Endothelial cell of umbilical vein (primary cell): ENCODE measurements at regions of chr1 and their contacts with region 1.

Region 1: DNA sequence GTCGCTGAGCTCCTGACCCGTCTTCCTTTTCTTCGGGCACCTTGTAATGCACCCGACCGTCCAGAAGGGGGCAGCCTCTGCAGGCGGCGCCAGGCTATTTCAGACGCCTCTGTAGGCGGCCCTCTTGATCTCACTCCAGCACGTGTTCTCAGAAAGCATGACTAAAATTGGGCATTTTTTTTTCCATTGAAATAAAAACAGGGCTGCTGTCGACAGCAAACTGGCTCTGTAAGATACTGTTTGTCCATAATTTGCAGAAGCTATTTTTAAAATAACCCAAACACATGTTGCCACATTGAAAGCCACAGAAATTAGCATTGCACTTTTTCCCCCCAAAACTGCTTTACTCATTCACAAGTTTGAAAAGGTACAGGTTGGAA is 78.0 kb downstream of the STUM start:
- DNase-seq: peak; percentile 66
- H3K4me3 ChIP-seq: no peak overlapping the region
- H3K27ac ChIP-seq: no peak overlapping the region
- H3K4me1 ChIP-seq: no peaks in the 10 kb centered on the region
- H3K27me3 ChIP-seq: no peaks in the 10 kb centered on the region
- CTCF ChIP-seq: peak; percentile 94 to 97
- POLR2A ChIP-seq: no peak

Region 2: DNA sequence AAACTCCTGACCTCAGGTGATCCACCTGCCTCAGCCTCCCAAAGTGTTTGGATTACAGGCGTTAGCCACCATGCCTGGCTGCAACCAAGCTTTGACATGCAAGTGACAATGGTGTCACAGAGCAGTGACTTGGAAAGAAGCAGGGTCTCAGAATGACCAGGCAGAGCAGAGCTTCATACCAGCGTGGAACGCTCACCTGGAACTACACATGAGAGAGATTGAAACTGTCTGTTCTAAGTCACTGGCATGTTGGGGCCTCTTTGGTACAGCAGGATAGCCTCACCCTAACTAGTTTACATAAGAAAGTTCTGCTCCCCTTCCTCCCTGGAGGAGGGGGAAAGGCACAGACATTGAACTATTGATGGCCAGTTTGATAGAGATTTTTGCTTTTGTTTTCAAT is 160.0 kb after region 1 on chr1:
- CTCF ChIA-PET with region 1: no interaction called
- POLR2A ChIA-PET with region 1: no interaction called
- dilution Hi-C with region 1: no loop called
- intact Hi-C with region 1: no loop called
- DNase-seq: no peak
- H3K4me3 ChIP-seq: no peak overlapping the region
- H3K27ac ChIP-seq: no peak overlapping the region
- H3K4me1 ChIP-seq: peaks cover 8% of the 10 kb centered on the region
- H3K27me3 ChIP-seq: peaks cover 3 to 4% of the 10 kb centered on the region in 2 experiments
- CTCF ChIP-seq: no peak
- POLR2A ChIP-seq: no peak

Region 3: GRCh38 chr1:226814751-226815496 is 188.4 kb after region 1 on chr1:
- CTCF ChIA-PET with region 1: interaction called, 12 read pairs
- POLR2A ChIA-PET with region 1: no interaction called
- dilution Hi-C with region 1: no loop called
- intact Hi-C with region 1: no loop called
- DNase-seq: peak; percentile 96
- H3K4me3 ChIP-seq: no peak overlapping the region
- H3K27ac ChIP-seq: peak overlapping the region; percentile 95
- H3K4me1 ChIP-seq: peaks cover 46% of the 10 kb centered on the region
- H3K27me3 ChIP-seq: no peaks in the 10 kb centered on the region
- CTCF ChIP-seq: no peak
- POLR2A ChIP-seq: no peak

Region 4: DNA sequence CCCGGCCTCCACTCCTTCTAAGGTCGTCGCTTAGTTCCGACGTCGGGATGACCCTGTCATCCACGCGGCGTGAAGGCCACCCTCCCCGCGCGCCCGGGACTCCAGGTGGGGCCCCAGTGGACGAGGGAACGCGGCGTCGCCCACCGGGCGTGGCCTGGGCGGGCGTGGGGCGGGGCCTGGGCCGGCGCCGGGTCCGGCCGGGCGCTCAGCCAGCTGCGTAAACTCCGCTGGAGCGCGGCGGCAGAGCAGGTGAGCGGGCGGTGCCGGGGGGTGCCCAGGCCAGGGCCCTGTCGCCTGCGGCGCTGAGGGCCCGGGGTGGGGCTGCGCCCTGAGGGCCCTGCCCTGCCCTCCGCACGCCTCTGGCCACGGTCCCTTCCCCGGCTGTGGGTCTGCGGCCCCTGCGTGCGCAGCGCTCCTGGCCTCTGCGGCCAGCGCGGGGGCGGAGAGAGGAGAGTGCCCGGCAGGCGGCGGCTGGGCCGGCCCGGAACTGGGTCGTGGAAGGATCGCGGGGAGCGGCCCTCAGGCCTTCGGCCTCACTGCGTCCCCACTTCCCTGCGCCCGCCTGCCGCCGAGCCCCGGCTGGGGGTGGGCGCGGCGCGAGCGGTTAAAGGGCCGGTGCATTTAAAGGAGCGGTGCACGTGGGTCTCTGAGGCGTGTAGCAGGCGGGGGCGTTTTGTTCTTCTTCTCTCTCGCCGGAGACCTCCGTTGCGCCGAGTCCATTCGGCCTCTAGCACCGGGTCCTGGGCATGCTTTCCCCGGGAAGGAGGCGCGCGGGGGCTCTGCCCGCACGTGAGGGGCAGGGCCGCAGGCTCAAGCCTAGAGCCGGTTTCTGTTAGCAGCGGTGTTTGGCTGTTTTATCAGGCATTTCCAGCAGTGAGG is 244.1 kb after region 1 on chr1 and contains the start of gene PSEN2:
- CTCF ChIA-PET with region 1: no interaction called
- POLR2A ChIA-PET with region 1: no interaction called
- dilution Hi-C with region 1: no loop called
- intact Hi-C with region 1: loop called (anchors 2 kb)
- DNase-seq: peak; percentile 51
- H3K4me3 ChIP-seq: peak within 1 kb of the TSS; percentile 55 to 65 (median 61)
- H3K27ac ChIP-seq: no peak within 1 kb of the TSS
- H3K4me1 ChIP-seq: peaks cover 16% of the 10 kb centered on the region
- H3K27me3 ChIP-seq: no peaks in the 10 kb centered on the region
- CTCF ChIP-seq: peak in 1 of 2 donors; percentile 27
- POLR2A ChIP-seq: no peak
- total RNA-seq, gene PSEN2: 12.5 and 17.1 TPM in 2 replicates

Region 5: DNA sequence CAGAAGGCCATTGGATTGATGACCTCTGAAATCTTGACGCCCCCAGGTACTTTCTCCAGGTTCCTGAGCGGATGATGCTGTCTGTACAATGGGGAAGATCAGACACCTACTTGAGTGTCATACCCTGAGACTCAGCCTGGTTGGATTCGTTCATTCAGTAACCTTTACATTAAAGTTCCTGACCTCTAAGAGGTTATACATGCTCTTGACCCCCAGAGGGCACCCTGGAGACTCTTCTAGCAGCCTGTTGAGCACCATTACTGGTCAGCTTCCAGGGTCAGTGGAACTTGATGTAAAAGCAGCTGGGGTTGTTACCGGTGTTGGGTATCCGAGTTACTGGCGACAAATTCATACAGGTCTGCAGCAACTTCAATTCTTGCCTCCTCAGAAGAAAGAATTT is 822.5 kb after region 1 on chr1:
- CTCF ChIA-PET with region 1: interaction called, 26 read pairs
- POLR2A ChIA-PET with region 1: no interaction called
- dilution Hi-C with region 1: no loop called
- intact Hi-C with region 1: loop called (anchors 2 kb)
- DNase-seq: no peak
- H3K4me3 ChIP-seq: no peak overlapping the region
- H3K27ac ChIP-seq: no peak overlapping the region
- H3K4me1 ChIP-seq: peaks cover 2% of the 10 kb centered on the region
- H3K27me3 ChIP-seq: peaks cover 3 to 6% of the 10 kb centered on the region in 2 experiments
- CTCF ChIP-seq: peak; percentile 29 to 37
- POLR2A ChIP-seq: no peak